Panc1 (cell line): ENCODE measurements at regions of chr2 and their contacts with region 1.

Region 1: DNA sequence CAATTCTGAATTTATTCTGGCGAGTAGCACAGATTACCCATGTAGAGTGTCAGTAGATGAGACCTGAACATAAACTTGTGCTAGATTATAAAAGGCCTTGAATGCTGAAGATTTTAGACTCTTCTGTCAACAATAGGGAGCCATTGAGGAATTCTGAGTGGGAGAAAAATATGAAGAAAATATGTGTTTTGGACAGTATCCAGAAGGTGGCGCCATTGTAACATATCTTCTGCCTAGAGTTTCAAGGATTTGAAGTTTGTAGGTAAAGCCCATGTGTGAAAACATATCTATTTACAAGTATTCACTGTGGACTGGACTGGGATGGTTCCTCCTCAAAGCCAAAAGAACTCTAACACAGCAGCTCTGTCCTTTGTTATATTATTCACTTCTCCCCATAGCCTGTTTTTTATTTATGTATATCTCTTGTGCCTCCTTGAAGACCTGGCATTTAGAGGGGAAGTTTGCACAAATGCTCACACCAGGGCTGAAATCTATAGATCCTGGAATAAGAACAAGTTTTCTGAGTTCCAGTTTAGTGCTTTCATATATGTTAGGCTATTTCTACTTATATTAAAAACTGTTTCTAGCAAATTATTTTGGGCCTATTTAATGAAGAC is 124.9 kb downstream of the RDH14 start:
- DNase-seq: peak; percentile 43
- ATAC-seq: peak; percentile 69; the same call in 1 of the 2 replicates
- H3K4me3 ChIP-seq: no peak overlapping the region
- H3K27ac ChIP-seq: no peak overlapping the region
- H3K4me1 ChIP-seq: no peaks in the 10 kb centered on the region
- H3K27me3 ChIP-seq: no peaks in the 10 kb centered on the region
- CTCF ChIP-seq: peak; percentile 71; the same call in 1 of the 2 replicates

Region 2: GRCh38 chr2:18496516-18496915 is 61.0 kb after region 1 on chr2:
- CTCF ChIA-PET with region 1: no interaction called
- POLR2A ChIA-PET with region 1: no interaction called
- in situ Hi-C with region 1: no loop called
- intact Hi-C with region 1: no loop called
- DNase-seq: no peak
- ATAC-seq: no peak
- H3K4me3 ChIP-seq: no peak overlapping the region
- H3K27ac ChIP-seq: no peak overlapping the region
- H3K4me1 ChIP-seq: no peaks in the 10 kb centered on the region
- H3K27me3 ChIP-seq: no peaks in the 10 kb centered on the region; the same call in 1 of the 2 replicates
- CTCF ChIP-seq: no peak

Region 3: DNA sequence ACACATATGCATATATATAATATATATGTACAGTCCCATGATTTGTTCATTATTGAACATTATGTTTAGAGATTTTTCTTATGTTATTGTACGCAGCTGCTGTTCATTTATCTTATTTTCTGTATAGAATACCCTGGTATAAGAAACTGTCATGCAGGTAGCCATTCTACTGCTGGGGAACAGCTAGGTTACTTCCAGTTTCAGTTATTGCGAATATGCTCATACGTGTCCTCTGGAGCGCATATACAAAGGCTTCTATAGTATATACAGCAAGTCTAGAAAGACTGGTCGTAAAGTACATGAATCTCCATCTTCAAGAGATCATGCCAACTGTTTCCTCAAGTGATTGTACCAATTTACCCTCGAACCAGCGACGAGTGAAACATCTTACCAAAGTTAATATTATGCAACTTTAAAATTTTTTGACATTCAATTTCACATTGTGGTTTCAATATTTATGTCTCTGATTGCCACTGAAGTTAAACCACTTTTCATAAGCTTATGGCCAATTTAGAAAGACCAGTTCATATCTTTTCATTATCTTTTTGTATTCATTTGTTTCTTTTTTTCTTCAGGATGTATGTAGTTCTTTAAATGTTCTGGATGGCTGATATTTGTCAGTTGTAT is 71.5 kb after region 1 on chr2:
- CTCF ChIA-PET with region 1: no interaction called
- POLR2A ChIA-PET with region 1: no interaction called
- in situ Hi-C with region 1: no loop called
- intact Hi-C with region 1: loop called (anchors 5 kb)
- DNase-seq: no peak
- ATAC-seq: no peak
- H3K4me3 ChIP-seq: no peak overlapping the region
- H3K27ac ChIP-seq: no peak overlapping the region
- H3K4me1 ChIP-seq: no peaks in the 10 kb centered on the region
- H3K27me3 ChIP-seq: no peaks in the 10 kb centered on the region
- CTCF ChIP-seq: no peak

Region 4: GRCh38 chr2:18719978-18720775 is 284.6 kb after region 1 on chr2:
- CTCF ChIA-PET with region 1: no interaction called
- POLR2A ChIA-PET with region 1: interaction called, 12 read pairs
- in situ Hi-C with region 1: no loop called
- intact Hi-C with region 1: no loop called
- DNase-seq: no peak
- ATAC-seq: no peak
- H3K4me3 ChIP-seq: no peak overlapping the region
- H3K27ac ChIP-seq: no peak overlapping the region
- H3K4me1 ChIP-seq: no peaks in the 10 kb centered on the region
- H3K27me3 ChIP-seq: no peaks in the 10 kb centered on the region
- CTCF ChIP-seq: no peak